Endothelial cell of umbilical vein (primary cell): ENCODE measurements at regions of chr20 and their contacts with region 1.

Region 1: DNA sequence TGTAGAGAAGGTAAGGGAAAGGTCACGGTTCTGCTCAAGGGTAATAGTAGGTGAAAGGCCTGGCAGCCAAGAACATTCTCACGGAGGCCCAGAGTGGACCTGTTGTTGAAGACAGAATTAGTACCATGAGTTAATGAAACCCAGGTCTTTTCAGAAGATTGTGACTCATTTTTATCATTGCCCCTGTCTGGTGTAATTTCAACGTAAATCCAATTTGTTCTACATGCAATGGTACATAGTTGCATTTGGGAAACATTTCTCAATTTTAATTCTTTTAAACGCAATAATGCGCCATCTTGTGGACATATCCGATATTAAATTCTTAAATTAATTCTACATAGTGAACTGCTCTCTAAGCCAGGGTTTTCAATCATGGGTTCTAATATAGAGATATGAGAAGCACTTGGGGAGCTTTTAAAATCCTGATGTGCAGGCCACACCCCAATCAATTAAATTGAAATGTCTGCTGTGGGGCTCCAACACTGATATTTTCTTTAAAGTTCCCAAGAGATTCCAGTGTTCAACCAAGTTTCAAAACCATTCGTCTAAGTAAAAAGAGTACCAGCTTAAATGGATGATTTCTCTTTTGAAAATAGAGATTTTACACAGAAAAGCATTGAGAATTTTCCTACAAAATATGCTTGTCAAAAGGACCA is 257.4 kb downstream of the PLCB1 start:
- DNase-seq: peak; percentile 61
- H3K4me3 ChIP-seq: no peak overlapping the region
- H3K27ac ChIP-seq: no peak overlapping the region
- H3K4me1 ChIP-seq: peaks cover 3% of the 10 kb centered on the region
- H3K27me3 ChIP-seq: no peaks in the 10 kb centered on the region
- CTCF ChIP-seq: peak; percentile 6 to 20
- POLR2A ChIP-seq: no peak

Region 2: DNA sequence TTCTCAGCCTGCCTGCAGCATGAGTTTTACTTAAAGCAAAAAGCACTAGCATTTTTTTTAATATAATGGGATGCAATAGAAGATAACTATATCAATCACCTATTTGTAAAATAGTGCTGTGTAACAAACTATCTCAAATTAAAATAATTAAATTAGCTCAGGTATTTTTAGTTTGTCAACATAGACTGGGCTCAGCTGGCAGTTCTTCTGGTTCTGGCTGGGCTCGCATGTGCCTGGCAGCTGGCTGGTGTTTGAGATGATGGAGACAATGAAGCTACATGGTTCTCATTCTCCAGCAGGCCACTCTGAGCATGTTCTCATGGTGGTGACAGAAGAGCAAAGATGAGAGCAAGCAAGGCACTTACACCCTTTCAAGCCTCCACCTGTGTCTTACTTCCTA is 76.4 kb before region 1 on chr20:
- CTCF ChIA-PET with region 1: no interaction called
- POLR2A ChIA-PET with region 1: no interaction called
- dilution Hi-C with region 1: no loop called
- intact Hi-C with region 1: no loop called
- DNase-seq: no peak
- H3K4me3 ChIP-seq: no peak overlapping the region
- H3K27ac ChIP-seq: no peak overlapping the region
- H3K4me1 ChIP-seq: no peaks in the 10 kb centered on the region
- H3K27me3 ChIP-seq: no peaks in the 10 kb centered on the region
- CTCF ChIP-seq: no peak
- POLR2A ChIP-seq: no peak

Region 3: DNA sequence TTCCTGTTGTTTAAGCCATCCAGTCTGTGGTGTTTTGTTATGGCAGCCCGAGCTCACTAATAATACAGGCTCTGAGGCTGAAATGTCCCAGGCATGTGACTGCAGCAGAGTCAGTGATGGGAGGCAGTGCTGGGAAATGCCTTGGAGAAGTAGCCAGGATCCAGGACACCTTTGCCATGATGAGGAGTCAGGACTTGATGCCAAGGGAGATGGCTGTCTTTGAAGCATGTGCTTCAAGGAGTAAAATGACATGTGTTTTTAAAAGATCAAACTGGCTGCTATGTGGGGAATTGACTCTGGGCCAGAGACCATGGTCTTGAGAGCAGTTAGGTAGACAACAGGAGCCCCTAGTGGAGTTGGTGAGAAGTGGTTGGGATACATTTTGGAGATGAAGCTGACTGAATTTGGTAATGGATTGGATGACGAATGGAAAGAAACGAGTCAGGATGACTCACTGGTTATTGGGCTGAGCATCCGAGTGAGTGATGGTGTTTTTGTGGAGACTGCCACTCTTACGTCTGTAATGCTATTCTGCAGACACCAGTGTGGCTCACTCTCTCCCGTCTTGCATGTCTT is 64.7 kb after region 1 on chr20:
- CTCF ChIA-PET with region 1: interaction called, 3 read pairs
- POLR2A ChIA-PET with region 1: no interaction called
- dilution Hi-C with region 1: no loop called
- intact Hi-C with region 1: loop called (anchors 5 kb)
- DNase-seq: peak; percentile 80
- H3K4me3 ChIP-seq: no peak overlapping the region
- H3K27ac ChIP-seq: no peak overlapping the region
- H3K4me1 ChIP-seq: no peaks in the 10 kb centered on the region
- H3K27me3 ChIP-seq: no peaks in the 10 kb centered on the region
- CTCF ChIP-seq: peak; percentile 40 to 42
- POLR2A ChIP-seq: no peak